ENCODE measurements at regions of chr4 and their contacts with region 1.

Region 1: DNA sequence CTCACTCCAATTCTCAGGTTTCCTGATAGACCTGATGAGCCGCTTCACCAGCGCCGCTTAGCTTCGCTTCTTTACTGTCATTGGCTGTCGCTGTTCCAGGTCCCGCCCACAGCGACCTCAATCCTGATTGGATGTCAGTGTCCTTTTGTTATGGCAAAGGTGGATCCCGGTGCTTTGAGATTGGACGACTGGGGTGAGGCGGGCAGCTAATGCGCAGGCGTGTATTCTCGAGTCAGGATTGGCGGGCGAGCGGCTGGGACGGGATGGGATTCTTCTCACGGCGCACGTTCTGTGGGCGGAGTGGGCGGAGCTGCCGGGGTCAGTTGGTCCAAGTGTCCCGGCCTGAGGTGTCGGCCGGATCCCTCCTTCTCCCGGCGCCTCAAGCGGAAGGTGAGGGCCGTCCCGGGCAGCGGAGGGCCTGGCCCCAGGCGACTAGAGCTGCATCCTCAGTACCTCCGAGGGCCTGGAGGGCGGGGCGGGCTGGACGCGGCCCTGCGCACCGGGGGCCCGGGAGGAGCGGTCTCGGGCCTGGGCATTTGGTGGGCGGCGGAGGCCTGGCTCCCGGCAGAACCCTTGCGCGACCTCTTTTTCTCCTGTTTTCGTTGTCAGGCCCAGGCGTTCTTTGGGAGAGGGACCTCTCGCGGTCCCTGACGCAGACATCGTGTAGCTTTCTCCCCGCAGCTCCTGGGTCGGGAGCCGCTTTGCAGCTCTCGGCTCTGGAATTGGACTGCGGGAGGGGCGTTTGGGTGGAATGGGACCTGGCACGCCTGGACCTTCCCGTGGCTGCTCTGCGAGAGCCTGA is at the start of gene SCOC:
- DNase-seq: peak; percentile 99
- ATAC-seq: peak; percentile 98
- H3K4me3 Mint-ChIP-seq: no peak within 1 kb of the TSS
- H3K27ac Mint-ChIP-seq: peak within 1 kb of the TSS; percentile 48
- H3K4me1 Mint-ChIP-seq: peaks cover 13% of the 10 kb centered on the region
- H3K27me3 Mint-ChIP-seq: no peaks in the 10 kb centered on the region
- total RNA-seq, gene SCOC: 22.7 to 24.9 TPM

Region 2: GRCh38 chr4:140469791-140470733 is 96.5 kb after region 1 on chr4:
- CTCF ChIA-PET with region 1: no interaction called
- POLR2A ChIA-PET with region 1: no interaction called
- DNase-seq: no peak
- ATAC-seq: no peak
- H3K4me3 Mint-ChIP-seq: no peak overlapping the region
- H3K27ac Mint-ChIP-seq: no peak overlapping the region
- H3K4me1 Mint-ChIP-seq: no peaks in the 10 kb centered on the region
- H3K27me3 Mint-ChIP-seq: peaks cover 39% of the 10 kb centered on the region

Region 3: DNA sequence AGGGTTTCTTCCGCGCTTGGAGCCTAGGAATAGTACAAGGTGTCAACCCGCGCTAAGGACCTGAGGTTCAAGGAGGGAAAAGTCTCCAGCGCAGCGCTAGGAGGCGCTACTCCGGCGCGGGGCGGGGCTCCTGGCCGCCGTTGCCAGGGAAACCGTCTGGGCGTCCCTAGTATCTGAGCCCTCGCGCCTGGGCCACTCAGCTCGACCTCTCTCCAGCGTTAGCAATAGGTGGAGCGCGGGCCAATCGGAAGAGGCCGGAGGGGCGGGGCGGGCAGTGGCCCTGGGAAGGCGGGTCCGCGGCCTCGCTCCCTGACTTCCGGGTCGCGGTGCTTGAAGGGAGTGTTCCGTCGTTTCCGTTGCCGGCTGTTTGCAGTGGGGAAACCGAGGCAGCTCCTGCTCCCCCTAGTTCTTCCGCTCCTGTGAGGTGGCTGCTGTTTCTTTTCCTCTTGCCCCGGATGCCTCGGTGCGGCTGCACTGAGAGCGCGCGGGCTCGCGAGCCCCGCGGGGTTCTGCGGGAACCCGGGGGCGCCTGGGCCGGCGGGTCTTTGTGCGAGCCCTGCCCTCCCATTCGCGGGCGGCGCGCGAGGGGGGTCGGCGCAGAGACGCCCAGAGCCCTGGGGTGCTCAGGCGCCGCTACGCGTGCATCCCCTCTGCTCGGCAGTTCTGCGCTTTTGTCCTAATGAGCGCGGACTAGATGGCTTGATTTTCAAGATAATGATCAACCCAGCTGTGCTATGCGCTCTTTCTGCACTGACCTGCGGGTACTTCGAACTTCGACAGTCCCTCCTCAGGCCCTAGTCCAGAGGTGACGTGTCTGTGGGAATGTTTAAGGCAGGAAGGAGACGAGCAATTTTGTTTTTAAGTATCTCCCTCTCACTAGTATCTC is 150.6 kb after region 1 on chr4 and contains the start of gene ELMOD2:
- CTCF ChIA-PET with region 1: interaction called, 16 read pairs
- POLR2A ChIA-PET with region 1: no interaction called
- DNase-seq: peak; percentile 98
- ATAC-seq: peak; percentile 100
- H3K4me3 Mint-ChIP-seq: peak within 1 kb of the TSS; percentile 87
- H3K27ac Mint-ChIP-seq: peak within 1 kb of the TSS; percentile 82
- H3K4me1 Mint-ChIP-seq: peaks cover 18% of the 10 kb centered on the region
- H3K27me3 Mint-ChIP-seq: no peaks in the 10 kb centered on the region
- total RNA-seq, gene ELMOD2: 13.1 to 15.5 TPM